Naive thymus-derived CD4-positive, alpha-beta T cell (primary cell): ENCODE measurements at regions of chr17 and their contacts with region 1.

Region 1: GRCh38 chr17:40340880-40341807 is 23.4 kb downstream of the GJD3 start:
- DNase-seq: peak; percentile 78 to 92 (median 85)
- ATAC-seq: peak; percentile 88
- H3K4me3 ChIP-seq: peak overlapping the region; percentile 73
- H3K4me3 Mint-ChIP-seq: peak overlapping the region; percentile 71 to 89 (median 82)
- H3K27ac ChIP-seq: peak overlapping the region; percentile 90
- H3K27ac Mint-ChIP-seq: peak overlapping the region; percentile 84 to 98 (median 96)
- H3K4me1 ChIP-seq: peaks cover 53 to 54% of the 10 kb centered on the region in 2 donors
- H3K4me1 Mint-ChIP-seq: peaks cover 46 to 80% (median 72%) of the 10 kb centered on the region in 7 donors
- H3K27me3 ChIP-seq: no peaks in the 10 kb centered on the region
- H3K27me3 Mint-ChIP-seq: no peaks in the 10 kb centered on the region

Region 2: DNA sequence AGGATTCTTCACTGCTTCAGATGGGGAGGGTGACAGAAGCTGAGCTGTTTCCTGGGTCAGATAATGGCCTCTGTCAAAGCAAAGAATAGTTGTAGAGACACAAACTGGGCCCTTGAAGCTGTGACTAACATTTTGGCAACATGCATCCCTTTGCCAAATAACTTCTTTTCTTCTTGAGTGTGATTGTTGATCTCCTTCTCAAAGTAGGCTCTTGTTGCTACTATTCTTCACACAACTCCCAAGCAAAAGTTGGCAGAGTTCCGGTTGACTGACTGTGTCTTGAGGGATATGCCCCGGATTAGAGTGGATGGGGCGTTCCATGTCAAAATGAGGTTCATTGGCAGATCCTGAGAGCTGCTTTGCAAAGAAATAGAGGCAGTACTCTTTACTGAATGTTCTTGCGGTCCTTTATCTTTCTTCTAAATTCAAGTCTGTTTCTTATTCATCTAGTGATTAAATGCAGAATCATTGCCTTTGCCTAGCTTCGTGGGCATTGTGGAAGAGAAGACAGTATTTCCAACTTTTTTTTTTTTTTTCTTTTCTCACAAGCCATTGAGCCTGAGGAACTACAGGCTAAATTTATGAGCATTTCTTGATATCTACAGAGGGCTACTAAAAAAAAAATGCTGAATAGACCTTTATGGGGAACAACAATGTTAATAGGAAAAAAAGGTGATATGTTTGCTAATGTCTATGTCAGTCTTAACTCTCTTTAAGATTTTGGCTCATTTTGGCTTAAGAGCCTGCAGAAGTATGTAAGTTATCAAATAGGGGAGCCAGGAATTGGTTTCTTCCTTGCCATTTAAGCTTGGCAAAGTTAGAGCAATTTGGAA is 116.2 kb before region 1 on chr17:
- CTCF ChIA-PET with region 1: no interaction called
- POLR2A ChIA-PET with region 1: no interaction called
- intact Hi-C with region 1: no loop called
- DNase-seq: no peak
- ATAC-seq: no peak
- H3K4me3 ChIP-seq: no peak overlapping the region
- H3K4me3 Mint-ChIP-seq: peak overlapping the region in 3 of 10 donors; percentile 5 to 51 (median 39)
- H3K27ac ChIP-seq: no peak overlapping the region
- H3K27ac Mint-ChIP-seq: peak overlapping the region in 5 of 9 donors; percentile 1 to 62 (median 48)
- H3K4me1 ChIP-seq: peaks cover 4 to 5% of the 10 kb centered on the region in 2 donors
- H3K4me1 Mint-ChIP-seq: peaks cover 27 to 55% (median 37%) of the 10 kb centered on the region in 7 donors
- H3K27me3 ChIP-seq: no peaks in the 10 kb centered on the region
- H3K27me3 Mint-ChIP-seq: no peaks in the 10 kb centered on the region

Region 3: DNA sequence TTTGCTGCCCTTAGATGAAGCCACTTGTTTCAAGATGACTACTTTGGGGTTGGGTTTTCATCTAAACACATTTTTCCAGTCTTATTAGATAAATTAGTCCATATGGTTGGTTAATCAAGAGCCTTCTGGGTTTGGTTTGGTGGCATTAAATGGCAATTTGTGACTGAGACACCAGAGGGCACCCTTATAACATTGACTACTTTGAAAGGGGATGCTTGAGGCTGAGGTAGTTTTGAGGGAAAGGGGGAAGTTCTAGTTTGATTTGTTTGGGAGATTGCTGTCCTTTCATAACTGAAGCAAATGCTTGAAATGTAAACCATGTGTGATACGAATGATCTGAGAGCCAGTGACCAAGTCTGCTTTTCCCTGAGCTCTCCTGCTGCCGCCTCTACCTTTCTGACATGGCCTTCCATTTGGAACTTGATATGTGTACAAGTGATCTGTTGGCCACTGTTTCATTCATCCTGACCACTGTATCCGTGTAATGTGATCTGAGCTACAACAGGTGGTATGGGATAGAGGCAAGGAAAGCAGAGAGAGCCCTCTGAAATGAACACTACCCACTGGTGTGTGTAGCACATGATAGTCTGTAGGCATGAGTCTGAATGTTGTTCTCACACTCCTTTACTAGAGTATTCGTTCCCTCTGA is 38.0 kb before region 1 on chr17:
- CTCF ChIA-PET with region 1: interaction called, 25 read pairs
- POLR2A ChIA-PET with region 1: interaction called, 742 read pairs
- intact Hi-C with region 1: loop called (anchors 1 kb)
- DNase-seq: peak in 7 of 9 donors; percentile 43 to 70 (median 64)
- ATAC-seq: peak; percentile 86
- H3K4me3 ChIP-seq: no peak overlapping the region
- H3K4me3 Mint-ChIP-seq: peak overlapping the region in 2 of 10 donors; percentile 8 to 44
- H3K27ac ChIP-seq: no peak overlapping the region
- H3K27ac Mint-ChIP-seq: peak overlapping the region in 7 of 9 donors; percentile 3 to 34 (median 19)
- H3K4me1 ChIP-seq: peaks cover 13 to 28% of the 10 kb centered on the region in 2 donors
- H3K4me1 Mint-ChIP-seq: peaks cover 11 to 21% (median 15%) of the 10 kb centered on the region in 7 donors
- H3K27me3 ChIP-seq: no peaks in the 10 kb centered on the region
- H3K27me3 Mint-ChIP-seq: no peaks in the 10 kb centered on the region

Region 4: GRCh38 chr17:40309031-40309948 is 31.9 kb before region 1 on chr17 and contains the start of gene RARA:
- CTCF ChIA-PET with region 1: interaction called, 25 read pairs
- POLR2A ChIA-PET with region 1: interaction called, 742 read pairs
- intact Hi-C with region 1: no loop called
- DNase-seq: no peak
- ATAC-seq: peak; percentile 56
- H3K4me3 ChIP-seq: peak within 1 kb of the TSS; percentile 51
- H3K4me3 Mint-ChIP-seq: peak within 1 kb of the TSS in 3 of 10 donors; percentile 4 to 51 (median 5)
- H3K27ac ChIP-seq: no peak within 1 kb of the TSS
- H3K27ac Mint-ChIP-seq: no peak within 1 kb of the TSS
- H3K4me1 ChIP-seq: peaks cover 36 to 58% of the 10 kb centered on the region in 2 donors
- H3K4me1 Mint-ChIP-seq: peaks cover 0 to 39% (median 23%) of the 10 kb centered on the region in 7 donors
- H3K27me3 ChIP-seq: no peaks in the 10 kb centered on the region
- H3K27me3 Mint-ChIP-seq: no peaks in the 10 kb centered on the region
- total RNA-seq, gene RARA: 40.0 to 115 (median 43.8) TPM

Region 5: DNA sequence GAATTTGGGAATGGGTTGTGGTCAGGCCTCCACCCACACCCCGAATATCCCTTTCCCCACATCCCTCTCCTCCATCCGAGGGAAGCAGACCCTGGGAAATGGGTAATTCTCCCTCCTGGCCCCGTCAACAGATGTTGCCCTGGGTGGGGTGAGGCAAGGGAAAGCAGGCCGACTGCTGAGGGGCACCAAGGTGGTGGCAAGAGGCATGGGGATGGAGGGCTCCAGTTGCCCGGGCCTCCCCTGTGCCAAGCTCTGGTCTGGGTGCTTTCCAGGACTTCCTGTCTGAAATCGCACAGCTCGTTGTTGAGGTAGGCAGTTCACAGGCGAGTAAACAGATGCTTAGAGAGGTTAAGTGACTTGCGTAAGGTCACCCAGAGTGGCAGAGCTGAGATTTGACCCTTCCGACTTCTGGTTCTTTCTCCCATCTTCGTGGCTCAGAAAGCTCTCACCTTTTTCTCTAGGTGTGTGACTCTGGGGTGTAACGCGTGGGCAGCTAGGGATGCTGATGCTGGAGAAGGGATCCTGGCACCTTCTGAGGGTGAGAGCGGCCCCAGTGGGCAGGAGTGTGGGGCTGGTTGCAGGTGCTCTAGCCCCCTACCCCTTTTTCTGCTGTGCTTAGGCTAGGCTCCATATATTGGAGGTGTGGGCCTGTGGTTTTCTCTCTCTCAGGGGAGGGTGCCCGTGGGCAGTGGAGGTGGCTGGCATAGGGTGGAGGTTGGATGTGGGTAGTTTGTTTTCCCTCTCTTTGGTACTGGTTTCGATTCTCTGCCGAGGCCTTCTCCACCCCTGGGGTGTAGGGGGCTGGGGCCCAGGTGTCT is 14.9 kb before region 1 on chr17:
- CTCF ChIA-PET with region 1: interaction called, 11 read pairs
- POLR2A ChIA-PET with region 1: interaction called, 742 read pairs
- intact Hi-C with region 1: loop called (anchors 1 kb)
- DNase-seq: peak in 7 of 9 donors; percentile 52 to 73 (median 67)
- ATAC-seq: peak; percentile 23
- H3K4me3 ChIP-seq: peak overlapping the region; percentile 47
- H3K4me3 Mint-ChIP-seq: peak overlapping the region; percentile 80 to 97 (median 88)
- H3K27ac ChIP-seq: peak overlapping the region; percentile 91
- H3K27ac Mint-ChIP-seq: peak overlapping the region; percentile 93 to 100 (median 99)
- H3K4me1 ChIP-seq: peaks cover 83 to 87% of the 10 kb centered on the region in 2 donors
- H3K4me1 Mint-ChIP-seq: peaks cover 68 to 97% (median 93%) of the 10 kb centered on the region in 7 donors
- H3K27me3 ChIP-seq: no peaks in the 10 kb centered on the region
- H3K27me3 Mint-ChIP-seq: peaks cover 0 to 9% (median 0%) of the 10 kb centered on the region in 5 donors

Region 6: DNA sequence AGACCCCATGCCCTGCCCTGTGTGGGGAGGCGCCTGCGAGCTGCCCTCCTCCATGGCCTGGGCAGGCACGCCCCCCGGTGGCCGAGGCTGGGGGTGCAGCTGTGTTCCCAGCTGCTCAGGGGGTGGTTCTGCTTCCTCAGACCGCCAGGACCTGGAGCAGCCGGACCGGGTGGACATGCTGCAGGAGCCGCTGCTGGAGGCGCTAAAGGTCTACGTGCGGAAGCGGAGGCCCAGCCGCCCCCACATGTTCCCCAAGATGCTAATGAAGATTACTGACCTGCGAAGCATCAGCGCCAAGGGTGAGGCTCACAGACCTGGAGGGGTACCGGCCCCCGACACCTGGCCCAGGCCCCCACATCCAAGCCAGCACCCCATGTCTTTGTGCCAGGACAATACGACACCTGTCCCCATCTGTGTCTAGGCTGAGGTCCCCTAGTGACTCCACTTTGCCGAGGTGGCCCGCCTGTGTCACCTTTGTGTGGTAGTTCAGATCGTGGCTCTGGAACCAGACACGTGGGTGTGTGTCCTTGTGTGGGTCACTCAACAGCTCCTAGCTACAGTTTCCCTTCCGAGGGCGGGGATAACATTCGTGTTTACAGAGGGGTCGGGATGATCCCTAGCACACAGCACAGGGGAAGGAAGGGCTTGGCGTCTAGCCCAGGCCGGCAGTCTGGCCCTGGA is 14.1 kb after region 1 on chr17:
- CTCF ChIA-PET with region 1: interaction called, 13 read pairs
- POLR2A ChIA-PET with region 1: interaction called, 4 read pairs
- intact Hi-C with region 1: loop called in 1 of 2 experiments (anchors 2 kb)
- DNase-seq: peak; percentile 63 to 93 (median 78)
- ATAC-seq: peak; percentile 86
- H3K4me3 ChIP-seq: no peak overlapping the region
- H3K4me3 Mint-ChIP-seq: peak overlapping the region in 1 of 10 donors; percentile 32
- H3K27ac ChIP-seq: no peak overlapping the region
- H3K27ac Mint-ChIP-seq: peak overlapping the region in 5 of 9 donors; percentile 6 to 69 (median 32)
- H3K4me1 ChIP-seq: no peaks in the 10 kb centered on the region
- H3K4me1 Mint-ChIP-seq: peaks cover 8 to 25% (median 18%) of the 10 kb centered on the region in 7 donors
- H3K27me3 ChIP-seq: no peaks in the 10 kb centered on the region
- H3K27me3 Mint-ChIP-seq: peaks cover 0 to 5% (median 0%) of the 10 kb centered on the region in 5 donors

Region 7: DNA sequence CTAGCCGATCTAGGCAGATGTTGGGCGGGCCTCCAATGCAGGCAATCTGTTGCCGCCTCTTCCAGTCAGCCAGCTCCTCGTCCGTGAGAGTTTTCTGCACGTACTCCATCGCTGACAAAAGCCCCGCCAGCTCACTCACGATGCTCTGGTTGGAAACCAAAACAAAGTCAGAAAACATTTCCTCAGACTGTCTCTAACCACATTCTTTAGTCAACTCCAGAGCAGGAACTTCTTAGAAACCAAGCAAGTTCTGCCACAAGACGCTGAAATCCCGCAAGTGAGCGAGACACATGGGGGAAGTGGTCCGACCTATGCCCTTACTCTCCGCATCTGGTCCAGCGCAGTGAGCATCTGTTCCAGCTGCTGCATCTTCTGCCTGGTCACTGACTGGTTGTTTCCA is 1996.3 kb after region 1 on chr17:
- CTCF ChIA-PET with region 1: no interaction called
- POLR2A ChIA-PET with region 1: no interaction called
- intact Hi-C with region 1: no loop called
- DNase-seq: peak; percentile 23 to 87 (median 80)
- ATAC-seq: peak; percentile 92
- H3K4me3 ChIP-seq: no peak overlapping the region
- H3K4me3 Mint-ChIP-seq: peak overlapping the region; percentile 52 to 84 (median 72)
- H3K27ac ChIP-seq: peak overlapping the region; percentile 77
- H3K27ac Mint-ChIP-seq: peak overlapping the region; percentile 85 to 98 (median 93)
- H3K4me1 ChIP-seq: peaks cover 11 to 29% of the 10 kb centered on the region in 2 donors
- H3K4me1 Mint-ChIP-seq: peaks cover 18 to 73% (median 38%) of the 10 kb centered on the region in 7 donors
- H3K27me3 ChIP-seq: no peaks in the 10 kb centered on the region
- H3K27me3 Mint-ChIP-seq: no peaks in the 10 kb centered on the region